ENCODE measurements at regions of chr2 and their contacts with region 1.

Region 1: DNA sequence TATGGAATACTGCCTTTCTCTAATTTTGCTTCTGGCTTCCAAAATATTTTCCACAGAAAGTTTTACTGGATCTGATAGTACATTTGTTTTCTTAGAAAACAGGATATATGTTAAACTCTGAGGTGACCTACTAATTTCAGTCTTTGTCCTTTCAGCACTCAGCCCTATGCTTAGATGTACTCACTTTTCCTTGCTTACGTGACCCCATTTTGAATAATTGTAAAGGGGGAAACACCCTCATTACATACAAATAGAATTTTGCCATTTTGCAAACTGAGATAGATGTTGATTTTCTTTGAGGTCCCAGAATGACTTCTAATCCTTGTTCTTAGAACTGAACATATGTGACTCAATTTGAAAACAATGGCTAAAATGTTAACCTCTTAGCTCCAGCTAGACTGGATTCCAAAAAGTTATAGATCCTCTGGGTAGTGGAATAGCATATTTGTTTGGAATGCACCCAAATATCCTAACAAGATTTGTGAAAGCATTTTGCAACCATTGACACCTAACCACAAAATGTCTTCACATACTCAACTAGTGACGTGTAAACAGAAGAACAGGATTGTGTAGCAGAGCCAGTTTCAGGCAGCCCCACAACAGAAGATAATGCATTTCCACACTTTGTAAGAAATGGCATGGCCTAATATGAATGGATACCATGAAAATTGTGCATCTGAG is 44.8 kb upstream of the EHBP1 start:
- DNase-seq: no peak
- ATAC-seq: no peak
- H3K4me3 Mint-ChIP-seq: no peak overlapping the region
- H3K27ac Mint-ChIP-seq: no peak overlapping the region
- H3K4me1 Mint-ChIP-seq: peaks cover 27% of the 10 kb centered on the region
- H3K27me3 Mint-ChIP-seq: peaks cover 2% of the 10 kb centered on the region
- CTCF ChIP-seq: no peak

Region 2: DNA sequence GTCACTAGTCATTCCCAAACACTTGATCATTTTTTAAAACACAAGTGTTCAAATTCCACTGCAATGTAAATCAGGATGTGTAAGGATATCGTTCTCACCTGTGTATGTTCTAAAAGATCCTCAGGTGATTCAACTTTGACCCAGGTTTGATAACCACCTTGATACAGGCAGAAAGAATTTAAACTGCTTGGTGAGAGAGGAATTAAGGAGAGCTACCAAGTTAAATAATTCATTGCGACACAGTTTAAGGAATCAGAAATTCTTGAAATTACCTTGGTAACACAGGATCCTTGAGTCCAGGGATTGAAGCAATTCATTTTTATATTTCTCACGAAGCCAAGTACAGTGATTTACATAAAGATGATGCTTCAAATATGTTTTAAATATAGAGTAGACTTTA is 35.9 kb before region 1 on chr2:
- CTCF ChIA-PET with region 1: no interaction called
- POLR2A ChIA-PET with region 1: no interaction called
- intact Hi-C with region 1: loop called (anchors 5 kb)
- DNase-seq: no peak
- ATAC-seq: no peak
- H3K4me3 Mint-ChIP-seq: no peak overlapping the region
- H3K27ac Mint-ChIP-seq: no peak overlapping the region
- H3K4me1 Mint-ChIP-seq: no peaks in the 10 kb centered on the region
- H3K27me3 Mint-ChIP-seq: peaks cover 14% of the 10 kb centered on the region
- CTCF ChIP-seq: no peak

Region 3: DNA sequence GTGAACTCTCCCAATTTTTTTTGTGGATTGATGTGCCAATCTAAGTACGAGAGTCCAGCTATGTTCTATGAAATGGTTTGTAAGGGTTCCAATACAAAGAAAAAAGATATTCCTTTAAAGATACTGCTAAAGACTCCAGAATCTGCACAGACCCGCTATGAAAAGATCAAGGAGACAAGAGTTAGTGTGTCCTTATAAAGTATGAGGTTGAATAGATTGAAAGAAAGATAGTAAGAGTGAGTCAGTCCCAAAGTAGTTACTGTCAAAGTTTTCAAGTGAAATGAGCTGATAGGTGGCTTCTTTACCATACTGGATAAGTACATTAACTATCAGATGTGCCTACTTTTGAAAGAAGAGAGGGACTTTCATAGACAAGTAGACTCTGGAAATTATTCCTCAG is 26.9 kb after region 1 on chr2:
- CTCF ChIA-PET with region 1: no interaction called
- POLR2A ChIA-PET with region 1: no interaction called
- intact Hi-C with region 1: no loop called
- DNase-seq: no peak
- ATAC-seq: no peak
- H3K4me3 Mint-ChIP-seq: no peak overlapping the region
- H3K27ac Mint-ChIP-seq: no peak overlapping the region
- H3K4me1 Mint-ChIP-seq: no peaks in the 10 kb centered on the region
- H3K27me3 Mint-ChIP-seq: peaks cover 16% of the 10 kb centered on the region
- CTCF ChIP-seq: no peak